AG04449 (cell line): ENCODE measurements at regions of chr3 and their contacts with region 1.

Region 1: DNA sequence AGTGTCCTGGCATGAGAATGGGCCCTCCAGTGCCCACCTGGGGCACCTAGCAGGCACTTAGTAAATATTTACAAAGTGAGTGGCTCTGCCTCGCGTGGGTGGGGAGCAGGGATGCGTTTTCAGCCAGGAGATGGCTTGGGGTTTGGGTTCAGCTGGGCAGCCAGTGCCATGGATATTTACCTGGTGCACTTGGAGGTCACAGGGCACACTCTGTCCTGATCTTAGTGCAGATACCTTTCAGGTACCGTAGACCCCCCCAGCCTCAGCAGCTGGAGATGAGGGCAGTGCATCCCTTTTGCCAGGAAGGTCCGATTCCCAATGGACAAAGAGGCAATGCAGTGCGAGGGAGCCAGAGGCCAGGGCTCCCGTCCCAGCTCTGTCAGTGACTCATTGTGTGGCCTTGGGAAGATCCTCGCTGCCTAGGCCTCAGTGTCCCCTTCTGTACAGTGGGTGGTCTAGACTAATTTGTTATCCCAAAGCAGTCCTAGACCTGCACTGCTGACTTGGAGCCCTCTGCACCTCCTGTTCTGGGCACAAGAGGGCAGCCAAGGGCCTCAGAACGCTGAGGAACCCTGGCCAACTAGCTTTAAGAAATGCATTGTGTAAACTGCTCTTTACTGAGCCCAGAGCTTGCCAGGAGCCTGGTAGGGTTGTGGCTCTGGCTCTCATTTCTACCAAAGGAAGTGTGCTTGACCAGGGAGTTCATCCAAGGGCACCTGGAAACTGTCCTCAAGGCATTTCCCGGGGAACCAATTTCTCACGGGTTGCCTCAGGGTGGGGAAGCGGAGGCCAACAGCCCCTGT is 16.0 kb downstream of the HDAC11 start:
- DNase-seq: peak; percentile 21
- H3K4me3 ChIP-seq: no peak overlapping the region
- CTCF ChIP-seq: peak; percentile 95

Region 2: GRCh38 chr3:13057282-13058040 is 438.7 kb before region 1 on chr3:
- CTCF ChIA-PET with region 1: no interaction called
- POLR2A ChIA-PET with region 1: no interaction called
- DNase-seq: no peak
- H3K4me3 ChIP-seq: no peak overlapping the region
- CTCF ChIP-seq: no peak

Region 3: DNA sequence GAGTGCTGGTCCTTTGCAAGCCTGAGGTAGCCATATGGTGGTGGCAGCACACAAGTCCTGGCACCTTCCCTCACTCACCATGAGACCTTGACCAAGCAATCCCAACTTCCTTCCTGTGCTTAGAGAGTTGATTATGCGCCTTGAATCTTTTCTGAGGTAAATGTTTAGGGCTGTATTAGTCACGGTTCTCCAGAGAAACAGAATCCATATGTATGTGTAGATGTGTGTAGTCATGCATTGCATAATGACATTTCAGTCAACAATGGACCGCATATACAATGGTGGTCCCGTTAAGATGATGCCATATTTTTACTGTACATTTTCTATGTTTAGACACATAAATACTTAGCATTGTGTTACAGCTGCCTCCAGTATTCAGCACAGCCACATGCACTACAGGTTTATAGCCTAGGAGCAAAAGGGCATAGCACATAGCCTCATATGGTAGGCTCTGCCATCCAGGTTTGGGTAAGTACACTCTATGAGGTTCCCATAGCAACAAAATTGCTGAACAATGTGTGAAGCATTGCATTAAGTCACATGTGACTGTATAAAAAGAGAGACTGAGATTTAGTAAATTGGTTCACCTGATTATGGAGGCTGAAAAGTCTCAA is 55.8 kb before region 1 on chr3:
- CTCF ChIA-PET with region 1: no interaction called
- POLR2A ChIA-PET with region 1: no interaction called
- DNase-seq: no peak
- H3K4me3 ChIP-seq: no peak overlapping the region
- CTCF ChIP-seq: no peak

Region 4: GRCh38 chr3:13479581-13480339 is 16.4 kb before region 1 on chr3 and contains the start of gene HDAC11:
- CTCF ChIA-PET with region 1: interaction called, 90 read pairs
- POLR2A ChIA-PET with region 1: no interaction called
- DNase-seq: peak; percentile 74
- H3K4me3 ChIP-seq: peak within 1 kb of the TSS; percentile 78
- CTCF ChIP-seq: no peak

Region 5: DNA sequence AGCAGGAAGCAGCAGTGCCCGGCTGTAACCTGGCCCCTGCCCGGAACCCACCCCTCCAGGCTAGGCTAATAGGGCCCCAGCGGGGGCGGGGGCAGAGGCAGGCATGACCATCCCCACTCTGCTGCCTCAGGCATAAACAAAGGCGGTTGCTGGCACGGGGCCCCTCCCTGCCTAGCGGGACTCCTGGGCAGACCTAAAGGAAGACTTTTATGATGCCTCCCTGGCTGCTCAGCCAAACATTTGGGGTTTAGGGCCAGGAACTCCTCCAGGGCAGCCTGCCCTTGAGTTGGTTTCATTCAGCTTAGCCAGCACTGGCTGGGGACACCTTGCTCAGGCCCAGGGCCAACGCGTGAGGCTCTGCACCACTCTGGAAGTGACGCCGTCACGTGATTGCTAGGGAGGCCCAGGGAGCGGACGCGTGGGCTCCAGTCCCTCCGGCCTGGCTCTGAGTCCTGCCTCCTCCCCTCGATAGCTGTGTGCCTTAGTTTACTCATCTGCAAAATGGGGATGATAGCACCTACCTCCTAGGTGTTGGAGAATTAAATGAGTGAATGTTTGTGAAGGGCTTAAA is 11.7 kb after region 1 on chr3:
- CTCF ChIA-PET with region 1: interaction called, 131 read pairs
- POLR2A ChIA-PET with region 1: no interaction called
- DNase-seq: no peak
- H3K4me3 ChIP-seq: no peak overlapping the region
- CTCF ChIP-seq: no peak